Activated CD4-positive, alpha-beta T cell treated with anti-CD3 and anti-CD28 coated beads, Interleukin-2, amount 10 ng/mL, durations not matched to agents 24 days and 14 days (primary cell): ENCODE measurements at regions of chr10 and their contacts with region 1.

Region 1: DNA sequence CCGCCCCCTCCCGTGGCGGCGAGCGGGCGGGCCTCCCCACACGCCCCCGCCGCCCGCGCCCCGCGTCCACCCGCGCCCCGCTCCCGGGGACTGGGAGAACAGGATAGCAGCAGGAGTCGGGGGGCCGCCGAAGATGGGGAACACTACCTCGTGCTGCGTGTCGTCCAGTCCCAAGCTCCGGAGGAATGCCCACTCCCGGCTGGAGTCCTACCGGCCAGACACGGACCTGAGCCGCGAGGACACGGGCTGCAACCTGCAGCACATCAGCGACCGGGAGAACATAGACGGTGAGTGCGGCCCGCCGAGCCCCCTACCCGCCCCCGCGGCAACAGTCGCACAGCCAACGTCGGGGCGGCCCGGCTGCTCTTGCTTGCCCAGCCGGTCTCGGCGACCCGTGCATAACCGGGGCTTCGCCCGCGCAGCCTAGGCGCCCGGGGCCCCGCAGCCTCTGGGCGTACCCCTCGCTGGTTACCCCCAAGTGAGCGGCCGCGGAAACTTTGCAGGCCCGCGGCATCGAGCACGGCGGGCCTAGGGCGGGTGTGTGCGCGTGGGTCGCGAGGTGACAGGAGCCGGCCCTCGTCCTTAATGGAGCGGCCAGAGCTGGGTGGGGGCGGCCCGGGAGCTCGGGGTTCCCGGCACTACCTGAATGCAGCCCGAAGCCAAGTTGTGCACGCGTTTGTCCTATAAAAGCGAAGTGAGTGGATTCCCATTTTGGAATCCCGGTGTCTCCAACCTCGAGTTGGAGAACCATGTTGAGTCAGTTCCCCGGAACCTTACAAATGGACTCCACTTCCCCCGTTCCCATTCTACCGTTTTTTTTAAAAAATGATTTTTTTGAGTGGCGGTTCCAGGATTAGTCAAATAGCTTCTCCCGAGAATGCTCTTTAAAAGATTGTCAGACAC is 863 bp downstream of the CCNY start:
- DNase-seq: peak; percentile 79
- H3K4me3 Mint-ChIP-seq: peak overlapping the region; percentile 87
- H3K27ac Mint-ChIP-seq: peak overlapping the region; percentile 87
- H3K4me1 Mint-ChIP-seq: peaks cover 55% of the 10 kb centered on the region
- H3K27me3 Mint-ChIP-seq: no peaks in the 10 kb centered on the region

Region 2: GRCh38 chr10:34835908-34836508 is 501.2 kb before region 1 on chr10:
- intact Hi-C with region 1: no loop called
- DNase-seq: no peak
- H3K4me3 Mint-ChIP-seq: no peak overlapping the region
- H3K27ac Mint-ChIP-seq: no peak overlapping the region
- H3K4me1 Mint-ChIP-seq: no peaks in the 10 kb centered on the region
- H3K27me3 Mint-ChIP-seq: peaks cover 3% of the 10 kb centered on the region

Region 3: DNA sequence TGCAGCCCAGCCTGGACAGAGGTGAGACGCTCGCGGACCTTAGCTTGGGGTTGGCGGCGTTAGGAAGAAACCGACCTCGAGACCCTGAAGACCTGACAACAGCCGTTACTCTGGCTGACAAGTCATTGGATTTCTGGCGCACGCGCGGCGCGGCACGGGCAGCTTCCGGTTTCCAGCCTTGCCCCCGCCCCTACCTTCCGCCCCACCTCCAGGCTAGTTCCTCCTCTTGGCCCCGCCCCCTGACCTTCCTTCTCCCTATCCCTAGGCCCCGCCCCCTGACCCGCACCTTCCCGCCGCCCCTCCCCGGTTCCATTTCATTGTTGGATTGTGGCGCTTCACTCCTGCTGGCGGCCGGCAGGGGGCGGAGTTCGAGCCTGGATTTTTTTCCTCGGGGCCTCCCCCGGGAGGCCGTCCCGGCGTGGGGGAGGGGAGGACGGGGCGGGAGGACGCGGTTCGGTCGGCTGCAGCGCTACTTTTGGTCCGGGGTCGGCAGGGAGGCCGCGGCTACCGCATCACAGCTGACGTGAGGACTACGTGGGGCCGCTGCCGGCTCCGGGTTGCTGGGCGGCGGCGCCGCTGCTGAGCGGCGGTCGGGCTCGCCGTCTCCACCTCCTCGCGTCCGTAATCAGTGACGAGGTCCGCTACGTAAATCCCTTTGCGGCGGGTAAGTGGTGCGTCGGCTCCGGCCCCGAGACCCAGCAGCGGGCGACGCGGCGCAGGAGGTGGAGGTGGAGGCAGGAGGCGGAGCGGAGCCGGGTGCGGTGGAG is 210.5 kb before region 1 on chr10 and contains the start of gene CREM:
- intact Hi-C with region 1: loop called (anchors 1 kb)
- DNase-seq: peak; percentile 99
- H3K4me3 Mint-ChIP-seq: peak within 1 kb of the TSS; percentile 99
- H3K27ac Mint-ChIP-seq: peak within 1 kb of the TSS; percentile 99
- H3K4me1 Mint-ChIP-seq: peaks cover 46% of the 10 kb centered on the region
- H3K27me3 Mint-ChIP-seq: no peaks in the 10 kb centered on the region
- total RNA-seq, gene CREM: 87.0 and 87.8 TPM in 2 replicates

Region 4: DNA sequence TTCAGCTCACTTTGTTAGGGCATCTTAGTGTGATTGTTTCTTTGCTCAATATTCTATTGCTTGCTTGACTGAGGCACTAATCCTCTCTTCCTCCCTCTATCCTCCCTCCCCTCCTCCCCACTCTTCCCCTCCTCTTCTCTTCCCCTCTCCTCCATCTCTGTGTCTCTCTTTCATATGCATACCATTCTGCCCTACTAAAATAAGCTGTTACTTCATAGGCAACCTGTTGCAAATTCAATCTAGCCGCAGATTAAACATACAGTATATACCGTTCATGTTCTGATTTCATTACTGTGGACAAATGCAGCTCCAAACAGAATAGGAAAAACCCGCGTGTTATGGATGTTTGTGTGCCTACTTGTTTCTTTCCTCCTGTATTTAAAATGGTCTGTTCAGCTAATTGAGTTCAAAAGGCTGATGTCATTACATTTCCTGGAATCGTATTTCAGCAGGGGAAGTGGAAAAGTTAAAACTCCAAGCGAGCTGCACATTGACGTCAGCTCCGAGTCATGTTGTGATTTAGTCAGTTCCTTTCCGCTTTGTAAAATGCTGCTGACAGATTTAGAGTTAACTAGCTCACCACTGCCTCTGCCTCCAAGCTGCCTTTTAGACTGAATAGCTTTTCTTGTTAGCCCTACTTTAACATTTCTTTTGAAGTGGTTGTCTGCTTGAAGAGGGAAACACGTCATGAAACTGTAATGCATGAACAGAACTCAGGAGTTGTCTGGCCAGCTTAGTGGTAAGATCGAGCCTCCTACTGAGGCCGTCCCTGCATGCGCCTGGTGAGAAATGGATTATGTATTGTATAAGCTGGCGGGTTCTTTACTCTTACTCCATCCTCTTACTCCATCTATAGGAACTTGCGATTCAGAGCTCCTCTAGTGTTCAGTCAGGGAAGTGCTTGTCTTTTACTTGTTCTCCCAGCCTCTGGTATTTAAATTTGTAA is 141.5 kb before region 1 on chr10:
- intact Hi-C with region 1: loop called (anchors 1 kb)
- DNase-seq: peak; percentile 94
- H3K4me3 Mint-ChIP-seq: peak overlapping the region; percentile 95
- H3K27ac Mint-ChIP-seq: peak overlapping the region; percentile 99
- H3K4me1 Mint-ChIP-seq: peaks cover 41% of the 10 kb centered on the region
- H3K27me3 Mint-ChIP-seq: no peaks in the 10 kb centered on the region

Region 5: GRCh38 chr10:35355971-35356724 is 19.0 kb after region 1 on chr10:
- intact Hi-C with region 1: loop called (anchors 1 kb)
- DNase-seq: peak; percentile 72
- H3K4me3 Mint-ChIP-seq: peak overlapping the region; percentile 75
- H3K27ac Mint-ChIP-seq: peak overlapping the region; percentile 98
- H3K4me1 Mint-ChIP-seq: peaks cover 58% of the 10 kb centered on the region
- H3K27me3 Mint-ChIP-seq: no peaks in the 10 kb centered on the region

Region 6: DNA sequence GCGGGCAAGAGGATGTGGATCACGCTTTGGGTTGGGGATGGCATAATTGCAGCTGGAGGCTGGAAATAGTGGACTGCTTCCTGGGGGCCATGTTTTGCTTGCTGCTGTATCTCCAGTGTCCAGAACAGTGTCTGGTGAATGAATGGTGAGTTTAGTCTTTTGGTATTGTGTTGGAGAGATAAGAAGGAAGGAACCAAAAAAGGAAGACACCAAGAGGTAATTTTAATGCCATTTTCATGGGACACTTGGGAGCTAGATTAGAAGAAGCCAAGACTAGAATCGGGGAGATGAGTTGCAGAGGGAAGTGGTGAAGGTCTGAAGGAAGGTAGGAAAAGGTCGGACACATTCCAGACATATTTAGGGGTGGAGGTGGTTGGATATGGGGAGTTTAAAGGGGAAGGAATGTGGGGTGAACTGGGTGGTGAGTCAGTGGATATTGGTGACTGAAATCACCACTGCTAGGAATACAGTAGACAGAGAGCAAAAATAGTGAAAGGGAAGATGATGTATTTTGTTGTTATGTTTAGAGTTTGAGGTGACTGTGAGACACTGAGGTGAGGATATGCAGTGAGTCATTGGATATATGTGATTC is 75.8 kb after region 1 on chr10:
- intact Hi-C with region 1: loop called (anchors 2 kb)
- DNase-seq: no peak
- H3K4me3 Mint-ChIP-seq: no peak overlapping the region
- H3K27ac Mint-ChIP-seq: no peak overlapping the region
- H3K4me1 Mint-ChIP-seq: peaks cover 41% of the 10 kb centered on the region
- H3K27me3 Mint-ChIP-seq: no peaks in the 10 kb centered on the region

Region 7: GRCh38 chr10:35447693-35448407 is 110.7 kb after region 1 on chr10:
- intact Hi-C with region 1: loop called (anchors 1 kb)
- DNase-seq: peak; percentile 75
- H3K4me3 Mint-ChIP-seq: peak overlapping the region; percentile 63
- H3K27ac Mint-ChIP-seq: peak overlapping the region; percentile 87
- H3K4me1 Mint-ChIP-seq: peaks cover 56% of the 10 kb centered on the region
- H3K27me3 Mint-ChIP-seq: no peaks in the 10 kb centered on the region

Region 8: DNA sequence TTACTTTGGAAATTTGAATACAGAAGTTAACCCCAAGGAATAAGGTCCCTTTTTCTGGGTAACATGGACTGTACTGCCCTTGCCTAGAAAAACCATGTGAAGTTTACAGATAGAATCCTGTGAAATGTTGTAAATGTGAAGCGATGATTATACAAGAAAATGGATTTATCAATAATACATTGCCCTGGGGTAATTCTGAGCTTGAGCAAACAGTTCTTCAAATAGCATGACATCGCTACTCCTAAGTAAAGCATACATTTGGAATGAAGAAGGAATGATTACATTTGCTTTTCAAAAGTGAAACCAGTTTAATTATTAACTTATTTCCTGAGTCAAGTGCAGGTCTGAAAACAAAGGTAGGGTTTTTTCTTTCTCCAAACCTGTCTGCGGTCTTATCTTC is 348.2 kb after region 1 on chr10:
- intact Hi-C with region 1: no loop called
- DNase-seq: no peak
- H3K4me3 Mint-ChIP-seq: no peak overlapping the region
- H3K27ac Mint-ChIP-seq: no peak overlapping the region
- H3K4me1 Mint-ChIP-seq: no peaks in the 10 kb centered on the region
- H3K27me3 Mint-ChIP-seq: no peaks in the 10 kb centered on the region